A673 (cell line): ENCODE measurements at regions of chr1 and their contacts with region 1.

Region 1: DNA sequence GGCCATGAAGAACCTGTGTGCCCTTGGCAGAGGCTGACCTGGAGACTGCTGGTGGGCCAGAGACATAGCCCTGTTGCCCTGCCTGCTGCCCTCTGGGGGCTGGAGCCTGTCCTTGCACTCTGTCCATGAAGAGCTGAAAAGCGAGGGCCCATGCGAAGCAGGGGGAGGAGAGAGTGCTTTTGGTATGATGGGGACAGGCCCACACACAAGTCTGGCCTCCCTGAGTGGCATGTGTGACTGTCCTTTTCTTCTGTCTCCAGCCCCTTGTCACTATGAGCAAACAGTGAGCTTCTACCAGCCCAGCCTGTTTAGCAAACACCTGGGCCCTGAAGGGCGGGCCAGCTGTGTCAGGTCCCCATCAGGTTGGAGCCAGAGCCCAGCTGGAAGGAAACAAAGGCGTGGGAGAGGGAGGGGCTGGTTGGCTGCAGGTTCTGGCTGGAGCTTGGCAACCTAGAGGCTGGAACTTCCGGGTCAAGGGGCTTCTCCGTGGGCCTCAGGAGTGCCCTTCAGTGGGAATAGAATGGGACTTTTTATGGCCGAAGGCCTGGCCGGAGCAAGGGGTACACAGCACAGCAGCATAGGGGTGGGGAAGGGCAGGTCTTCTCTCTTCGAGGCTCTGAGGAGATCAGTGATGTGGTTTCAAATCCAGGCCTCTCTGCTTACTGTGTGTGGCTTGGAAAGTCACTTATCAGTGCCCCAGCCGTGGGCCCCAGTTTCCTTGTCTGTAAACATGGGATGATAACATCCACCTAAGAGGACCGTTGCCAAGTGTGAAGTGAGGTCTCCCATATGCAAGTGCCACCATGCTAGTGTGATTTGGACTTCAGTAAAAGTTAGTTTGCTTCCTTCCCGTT is 14.3 kb downstream of the QSOX1 start:
- DNase-seq: peak; percentile 51
- H3K4me3 ChIP-seq: no peak overlapping the region
- H3K27ac ChIP-seq: no peak overlapping the region
- H3K4me1 ChIP-seq: peaks cover 21% of the 10 kb centered on the region
- H3K27me3 ChIP-seq: no peaks in the 10 kb centered on the region
- CTCF ChIP-seq: peak; percentile 59

Region 2: DNA sequence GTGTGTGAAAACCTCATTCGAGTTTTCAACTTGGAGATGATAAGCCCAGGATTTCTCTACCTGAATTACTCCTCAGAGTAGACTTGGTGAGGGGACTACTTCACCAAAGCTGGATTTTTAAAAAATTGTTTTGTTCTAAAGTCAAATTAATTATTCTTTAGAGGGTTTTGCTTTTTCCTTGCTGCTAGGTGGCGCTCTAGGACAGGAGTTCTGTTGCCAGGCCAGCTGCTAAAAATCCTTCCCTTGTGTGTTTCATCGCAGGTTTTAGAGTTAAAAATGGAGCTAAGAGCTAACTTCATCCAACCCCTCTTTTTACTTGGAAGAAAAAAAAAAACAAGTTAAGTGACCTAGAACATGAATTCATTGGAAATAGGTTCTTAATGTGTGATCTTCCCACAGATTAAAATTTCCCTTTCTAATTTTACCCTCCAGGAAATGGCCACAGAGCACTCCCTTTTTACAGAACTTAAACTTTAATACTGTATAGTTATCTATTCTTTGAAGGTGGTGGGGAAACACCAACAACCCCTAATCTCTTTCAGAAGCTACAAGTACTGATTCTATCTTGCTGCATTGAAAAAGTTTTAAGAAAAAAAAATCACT is 462.6 kb before region 1 on chr1:
- CTCF ChIA-PET with region 1: interaction called, 11 read pairs
- POLR2A ChIA-PET with region 1: no interaction called
- intact Hi-C with region 1: no loop called
- DNase-seq: peak; percentile 75
- H3K4me3 ChIP-seq: no peak overlapping the region
- H3K27ac ChIP-seq: no peak overlapping the region
- H3K4me1 ChIP-seq: no peaks in the 10 kb centered on the region
- H3K27me3 ChIP-seq: no peaks in the 10 kb centered on the region
- CTCF ChIP-seq: peak; percentile 88

Region 3: GRCh38 chr1:180116964-180117763 is 51.8 kb before region 1 on chr1:
- CTCF ChIA-PET with region 1: no interaction called
- POLR2A ChIA-PET with region 1: no interaction called
- intact Hi-C with region 1: no loop called
- DNase-seq: no peak
- H3K4me3 ChIP-seq: no peak overlapping the region
- H3K27ac ChIP-seq: no peak overlapping the region
- H3K4me1 ChIP-seq: no peaks in the 10 kb centered on the region
- H3K27me3 ChIP-seq: no peaks in the 10 kb centered on the region
- CTCF ChIP-seq: no peak

Region 4: GRCh38 chr1:180382317-180383115 is 213.5 kb after region 1 on chr1:
- CTCF ChIA-PET with region 1: no interaction called
- POLR2A ChIA-PET with region 1: no interaction called
- intact Hi-C with region 1: no loop called
- DNase-seq: peak; percentile 6
- H3K4me3 ChIP-seq: no peak overlapping the region
- H3K27ac ChIP-seq: no peak overlapping the region
- H3K4me1 ChIP-seq: no peaks in the 10 kb centered on the region
- H3K27me3 ChIP-seq: no peaks in the 10 kb centered on the region
- CTCF ChIP-seq: no peak